Left cardiac atrium (tissue), 4 donors: ENCODE measurements at regions of chr7 and their contacts with region 1.

Region 1: DNA sequence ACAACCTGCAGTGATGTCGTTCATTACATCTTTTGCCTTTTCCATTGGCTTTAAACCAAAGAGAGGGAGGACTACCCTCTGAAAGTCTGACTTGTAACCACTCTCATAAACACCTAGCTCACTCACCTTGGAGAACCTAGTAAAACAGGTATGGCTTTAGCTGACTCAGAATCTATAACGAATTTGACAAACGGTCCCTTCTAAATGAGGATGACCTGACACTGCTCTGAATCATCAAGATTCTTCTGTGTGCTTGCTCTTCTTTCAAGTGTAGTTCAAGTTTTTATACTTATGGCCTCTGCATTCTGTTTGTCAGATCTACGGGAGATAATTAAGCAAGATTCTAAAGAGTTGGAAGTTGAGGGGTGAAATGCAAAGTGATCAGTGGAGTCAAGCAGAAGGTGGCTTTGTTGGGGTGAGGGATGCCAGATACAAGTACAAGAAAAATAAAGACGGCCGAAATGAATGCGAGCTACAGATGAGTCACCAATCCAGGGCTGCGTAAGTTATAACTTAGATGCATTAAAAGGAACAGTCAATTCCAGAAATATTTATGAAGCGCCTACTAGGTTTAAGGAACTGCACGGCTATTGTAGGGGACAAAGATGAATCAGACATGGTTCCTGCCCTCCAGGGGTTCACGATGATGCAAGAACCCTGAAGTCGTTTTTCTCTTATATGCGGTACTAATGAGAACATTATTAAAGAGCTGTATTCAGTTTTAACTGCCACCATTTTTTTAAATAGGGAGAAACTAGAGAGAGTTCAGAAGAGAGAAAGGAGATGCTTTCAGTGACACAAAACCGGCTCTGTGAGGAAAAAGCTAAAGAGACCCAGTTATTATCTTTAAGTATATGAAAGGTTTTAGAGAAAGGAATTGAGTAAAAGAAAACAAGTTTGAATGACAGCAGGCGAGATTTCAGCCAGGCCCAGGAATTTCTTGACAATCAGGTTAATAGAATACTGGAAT is 6.5 kb downstream of the HIPK2 start:
- DNase-seq: no peak
- ATAC-seq: no peak

Region 2: GRCh38 chr7:139543801-139544603 is 227.3 kb before region 1 on chr7:
- intact Hi-C with region 1: no loop called
- DNase-seq: no peak
- ATAC-seq: peak in 1 of 2 donors; percentile 19

Region 3: DNA sequence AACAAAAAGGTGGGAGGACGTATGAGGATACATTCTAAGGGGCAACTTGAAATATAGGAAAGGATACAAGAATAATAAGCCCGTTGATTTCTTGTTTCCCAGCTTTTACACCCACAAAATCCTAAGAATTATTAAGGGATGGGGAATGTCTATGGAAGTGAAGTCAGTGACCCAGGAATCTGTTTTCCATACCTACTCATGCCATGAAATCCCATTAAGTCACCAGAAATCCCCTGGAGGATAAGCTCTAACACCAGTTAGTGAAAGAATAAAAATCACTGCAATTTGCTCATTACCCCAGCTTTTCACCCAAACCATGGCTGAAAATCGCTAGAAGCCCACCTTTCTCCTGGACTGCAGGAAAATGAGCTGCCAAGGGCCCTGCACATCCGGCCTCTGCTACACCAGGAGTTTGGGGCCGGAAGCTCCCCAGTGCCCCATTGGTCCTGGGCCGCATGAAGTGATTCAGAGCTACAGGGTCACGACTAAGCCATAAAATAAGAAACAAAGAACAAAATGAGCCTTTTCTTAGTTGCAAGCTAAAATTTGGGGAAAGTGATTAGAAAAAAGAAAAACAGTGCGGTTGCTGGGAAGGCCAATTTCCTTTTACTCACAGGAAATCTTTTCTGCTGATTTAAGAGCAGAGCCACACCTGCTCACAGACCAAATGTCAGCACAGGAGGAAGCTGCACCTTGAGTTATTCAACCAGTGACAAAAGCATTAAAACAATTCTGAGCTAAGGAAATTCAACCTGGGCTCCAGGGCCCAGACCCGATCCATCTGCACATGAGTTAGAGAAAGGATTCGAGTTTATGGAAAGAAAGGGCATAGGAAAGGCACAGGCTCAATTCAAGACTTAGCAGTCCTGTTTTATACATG is 33.8 kb before region 1 on chr7:
- intact Hi-C with region 1: loop called in 1 of 2 experiments (anchors 5 kb)
- DNase-seq: peak; percentile 41
- ATAC-seq: no peak